ENCODE measurements at regions of chr11 and their contacts with region 1.

Region 1: DNA sequence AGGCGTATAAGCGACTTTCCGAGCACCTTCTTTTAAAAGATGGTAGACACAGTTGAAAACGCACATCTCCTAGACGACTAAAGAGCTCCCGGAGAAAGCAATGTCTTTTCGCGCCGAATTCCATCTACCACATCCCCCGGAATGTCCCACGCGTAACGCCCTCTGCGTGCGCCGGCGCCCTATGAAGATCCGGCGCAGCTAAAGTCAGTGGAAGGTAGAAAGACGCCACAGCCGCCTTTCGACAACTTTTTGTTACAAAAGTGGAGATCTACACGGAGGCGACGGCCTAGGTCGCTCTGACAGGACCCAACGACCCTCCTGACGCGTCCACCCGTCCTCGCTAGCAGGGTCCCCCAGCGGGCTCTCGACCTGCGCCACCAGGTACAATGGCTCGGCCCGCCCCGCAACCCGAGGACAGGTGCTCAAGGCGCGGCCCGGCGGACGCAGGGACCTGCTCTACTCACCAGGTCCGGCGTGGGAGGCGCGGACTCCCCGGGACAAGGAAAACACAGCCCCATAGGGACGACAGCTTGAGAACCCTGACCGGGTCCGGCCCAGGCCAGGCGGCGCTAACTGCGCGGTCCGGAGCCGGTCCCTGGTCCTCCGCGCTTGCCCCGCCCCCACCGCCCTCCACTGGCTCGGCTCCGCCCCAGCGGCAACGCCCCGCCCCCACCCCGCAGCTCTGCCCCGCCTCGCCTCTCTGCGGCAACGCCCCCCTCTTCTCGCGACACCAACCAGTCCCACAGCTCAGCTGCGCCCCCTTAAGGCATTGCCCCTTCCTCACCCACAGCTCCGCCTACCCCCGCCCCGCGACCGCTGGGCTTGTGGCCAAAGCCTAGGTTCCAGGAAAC is at the start of gene SVIP:
- DNase-seq: peak; percentile 99
- H3K4me3 ChIP-seq: peak within 1 kb of the TSS; percentile 91 to 99 (median 95)
- H3K27ac ChIP-seq: peak within 1 kb of the TSS; percentile 86
- H3K4me1 ChIP-seq: peaks cover 26% of the 10 kb centered on the region
- H3K27me3 ChIP-seq: no peaks in the 10 kb centered on the region
- CTCF ChIP-seq: peak; percentile 76 to 88
- POLR2A ChIP-seq: peak; percentile 94
- total RNA-seq, gene SVIP: 69.5 and 70.5 TPM in 2 replicates

Region 2: GRCh38 chr11:22331771-22332170 is 497.7 kb before region 1 on chr11:
- CTCF ChIA-PET with region 1: no interaction called
- POLR2A ChIA-PET with region 1: no interaction called
- dilution Hi-C with region 1: no loop called
- intact Hi-C with region 1: loop called (anchors 2 kb)
- DNase-seq: no peak
- H3K4me3 ChIP-seq: no peak overlapping the region
- H3K27ac ChIP-seq: no peak overlapping the region
- H3K4me1 ChIP-seq: no peaks in the 10 kb centered on the region
- H3K27me3 ChIP-seq: peaks cover 4 to 9% of the 10 kb centered on the region in 2 experiments
- CTCF ChIP-seq: no peak
- POLR2A ChIP-seq: no peak

Region 3: DNA sequence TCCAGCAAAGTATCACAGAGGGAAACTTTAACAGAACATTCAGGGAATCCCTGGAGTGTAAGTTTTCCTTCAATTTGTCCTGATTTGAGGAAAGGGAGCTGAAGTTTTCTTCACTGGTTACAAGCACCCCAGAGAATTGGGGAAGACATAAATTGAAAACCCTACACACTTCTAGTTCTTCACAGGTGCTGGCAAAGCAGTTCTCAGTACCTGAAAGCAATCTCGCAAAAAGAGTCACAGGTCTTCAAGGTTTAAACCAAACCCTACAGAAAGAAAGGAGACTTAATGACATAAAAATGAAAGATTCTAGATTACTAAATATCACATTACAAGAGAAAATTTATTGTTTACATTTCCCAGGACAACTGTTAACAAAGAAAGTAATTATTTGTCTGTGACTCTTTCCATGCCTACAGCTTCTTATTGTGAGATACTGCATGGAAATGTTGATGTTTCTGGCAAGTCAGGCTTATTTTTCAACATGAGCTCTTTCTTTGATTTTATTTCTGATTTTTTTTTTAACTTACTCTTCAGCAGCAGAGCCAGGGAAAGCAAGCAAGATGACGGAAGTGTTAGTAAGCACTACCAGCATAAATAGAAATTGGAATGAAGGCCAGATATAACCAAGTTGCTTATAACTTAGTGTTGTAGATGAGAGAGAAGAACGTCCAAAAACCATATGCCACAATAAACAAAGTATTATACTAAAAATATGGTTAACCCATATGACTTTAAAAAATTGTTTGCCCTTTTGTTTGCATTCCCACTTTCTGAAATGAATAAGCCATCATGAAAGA is 247.9 kb before region 1 on chr11:
- CTCF ChIA-PET with region 1: no interaction called
- POLR2A ChIA-PET with region 1: no interaction called
- dilution Hi-C with region 1: no loop called
- intact Hi-C with region 1: no loop called
- DNase-seq: no peak
- H3K4me3 ChIP-seq: no peak overlapping the region
- H3K27ac ChIP-seq: no peak overlapping the region
- H3K4me1 ChIP-seq: no peaks in the 10 kb centered on the region
- H3K27me3 ChIP-seq: no peaks in the 10 kb centered on the region
- CTCF ChIP-seq: no peak
- POLR2A ChIP-seq: no peak

Region 4: DNA sequence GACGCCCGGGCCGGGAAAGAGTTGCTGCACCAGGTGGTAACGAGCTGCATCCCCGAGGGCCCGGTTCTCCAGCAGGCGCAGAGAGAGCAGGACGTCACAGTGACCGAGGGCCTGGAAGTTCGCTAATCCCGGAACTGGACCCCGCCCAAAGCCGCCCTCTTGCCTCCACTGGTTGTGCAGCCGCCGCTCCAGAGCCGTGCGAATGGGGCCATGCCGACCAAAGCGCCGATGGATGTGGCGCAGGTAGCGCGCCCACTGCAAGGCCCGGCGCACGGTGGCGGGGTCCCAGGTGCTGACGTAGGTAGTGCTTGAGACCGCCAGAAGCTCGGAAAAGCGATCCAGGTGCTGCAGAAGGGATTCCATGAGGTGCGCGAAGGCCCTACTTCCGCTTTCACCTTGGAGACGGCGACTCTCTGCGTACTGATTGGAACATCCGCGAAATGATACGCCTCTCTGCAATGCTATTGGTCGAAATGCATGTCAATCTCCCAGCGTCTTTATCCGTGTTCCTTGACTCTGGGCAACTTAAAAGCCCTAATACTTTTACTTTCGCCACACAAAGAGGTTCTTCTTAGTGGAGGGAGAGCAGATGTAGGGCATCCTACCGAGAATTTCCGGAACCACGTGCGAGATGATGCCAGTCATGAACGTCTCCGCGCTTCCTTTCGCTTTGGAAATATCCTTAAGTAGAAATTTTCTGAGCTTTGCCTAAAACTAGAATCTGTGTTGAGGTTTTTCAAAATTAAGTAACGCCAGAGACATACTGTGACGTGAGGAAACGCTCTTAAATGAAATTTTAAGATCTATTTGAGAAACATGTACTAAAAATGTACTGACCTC is 203.8 kb before region 1 on chr11 and contains the start of gene FANCF:
- CTCF ChIA-PET with region 1: interaction called, 4 read pairs
- POLR2A ChIA-PET with region 1: no interaction called
- dilution Hi-C with region 1: no loop called
- intact Hi-C with region 1: loop called (anchors 1 kb)
- DNase-seq: peak; percentile 99
- H3K4me3 ChIP-seq: peak within 1 kb of the TSS; percentile 75 to 89 (median 80)
- H3K27ac ChIP-seq: peak within 1 kb of the TSS; percentile 59
- H3K4me1 ChIP-seq: peaks cover 12% of the 10 kb centered on the region
- H3K27me3 ChIP-seq: no peaks in the 10 kb centered on the region
- CTCF ChIP-seq: no peak
- POLR2A ChIP-seq: peak; percentile 41
- total RNA-seq, gene FANCF: 7.4 and 7.6 TPM in 2 replicates

Region 5: DNA sequence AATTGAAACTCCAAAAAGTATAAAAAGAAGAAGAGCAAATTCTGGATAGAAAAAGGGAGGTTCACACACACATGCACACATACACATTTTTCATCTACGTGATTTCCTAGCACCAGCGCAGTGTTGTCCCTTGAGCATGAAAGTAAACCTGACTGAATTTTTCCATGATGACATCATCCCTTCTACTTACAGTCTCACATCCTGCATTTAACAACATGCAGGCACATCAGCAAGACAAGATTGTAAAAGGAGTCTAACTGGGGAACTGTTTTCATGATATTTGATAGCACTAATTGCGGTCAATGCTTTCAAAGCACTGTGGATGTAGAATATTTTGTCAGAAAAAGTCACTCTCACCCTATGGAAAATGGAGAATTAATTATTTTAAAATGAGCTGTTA is 126.4 kb before region 1 on chr11:
- CTCF ChIA-PET with region 1: interaction called, 3 read pairs
- POLR2A ChIA-PET with region 1: interaction called, 5 read pairs
- dilution Hi-C with region 1: no loop called
- intact Hi-C with region 1: loop called (anchors 5 kb)
- DNase-seq: peak; percentile 93
- H3K4me3 ChIP-seq: peak overlapping the region in 1 of 3 experiments; percentile 22
- H3K27ac ChIP-seq: peak overlapping the region; percentile 68
- H3K4me1 ChIP-seq: peaks cover 20% of the 10 kb centered on the region
- H3K27me3 ChIP-seq: peaks cover 0 to 10% of the 10 kb centered on the region in 2 experiments
- CTCF ChIP-seq: no peak
- POLR2A ChIP-seq: no peak

Region 6: GRCh38 chr11:23021287-23021863 is 191.9 kb after region 1 on chr11:
- CTCF ChIA-PET with region 1: no interaction called
- POLR2A ChIA-PET with region 1: no interaction called
- dilution Hi-C with region 1: no loop called
- intact Hi-C with region 1: no loop called
- DNase-seq: peak; percentile 33
- H3K4me3 ChIP-seq: no peak overlapping the region
- H3K27ac ChIP-seq: no peak overlapping the region
- H3K4me1 ChIP-seq: no peaks in the 10 kb centered on the region
- H3K27me3 ChIP-seq: no peaks in the 10 kb centered on the region
- CTCF ChIP-seq: peak; percentile 60 to 66
- POLR2A ChIP-seq: no peak

Region 7: DNA sequence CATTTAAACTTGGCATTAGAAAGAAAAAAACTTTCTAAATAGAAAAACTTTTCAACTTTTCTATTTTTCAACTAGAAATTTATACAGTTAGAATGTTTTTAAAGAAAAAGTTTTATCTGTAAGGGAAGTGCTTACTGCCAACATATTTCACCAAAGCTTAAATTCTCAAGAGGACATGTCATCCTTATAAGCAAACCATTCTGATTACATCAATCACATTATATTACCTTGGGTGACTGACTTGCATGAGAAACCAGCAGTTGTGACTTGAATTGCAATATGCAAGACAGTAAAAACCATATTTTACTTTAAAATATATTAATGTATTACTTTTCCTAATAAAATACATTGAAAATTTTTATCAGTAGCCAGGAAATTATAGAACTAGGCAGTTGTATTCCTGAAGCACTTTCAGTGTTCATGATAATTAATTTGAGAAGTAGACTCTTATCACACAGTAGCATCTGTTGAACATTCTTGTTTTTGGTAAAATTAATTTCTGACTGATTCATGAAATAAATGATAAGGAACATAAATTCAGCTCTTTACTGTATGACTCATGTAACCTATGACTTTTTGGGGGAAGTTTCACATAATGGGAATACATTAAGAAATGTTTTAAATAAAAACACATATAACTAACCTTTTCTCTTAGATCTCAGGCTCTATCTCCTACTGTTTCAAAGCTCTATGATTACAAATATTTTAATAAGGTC is 375.9 kb after region 1 on chr11:
- CTCF ChIA-PET with region 1: no interaction called
- POLR2A ChIA-PET with region 1: no interaction called
- dilution Hi-C with region 1: no loop called
- intact Hi-C with region 1: loop called (anchors 5 kb)
- DNase-seq: peak; percentile 90
- H3K4me3 ChIP-seq: no peak overlapping the region
- H3K27ac ChIP-seq: peak overlapping the region; percentile 95
- H3K4me1 ChIP-seq: peaks cover 33% of the 10 kb centered on the region
- H3K27me3 ChIP-seq: no peaks in the 10 kb centered on the region
- CTCF ChIP-seq: no peak
- POLR2A ChIP-seq: no peak